Activated T-helper 1 cell treated with anti-CD3 and anti-CD28 coated beads, Interleukin-12 subunit alpha, Interleukin-12 subunit beta, Interleukin-2, Interleukin-4 antibody, amounts not matched to agents 30 ng/mL and 10 ng/mL and 1 ng/mL, durations not matched to agents 14 hours and 24 hours and 36 hours (primary cell): ENCODE measurements at regions of chr6 and their contacts with region 1.

Region 1: DNA sequence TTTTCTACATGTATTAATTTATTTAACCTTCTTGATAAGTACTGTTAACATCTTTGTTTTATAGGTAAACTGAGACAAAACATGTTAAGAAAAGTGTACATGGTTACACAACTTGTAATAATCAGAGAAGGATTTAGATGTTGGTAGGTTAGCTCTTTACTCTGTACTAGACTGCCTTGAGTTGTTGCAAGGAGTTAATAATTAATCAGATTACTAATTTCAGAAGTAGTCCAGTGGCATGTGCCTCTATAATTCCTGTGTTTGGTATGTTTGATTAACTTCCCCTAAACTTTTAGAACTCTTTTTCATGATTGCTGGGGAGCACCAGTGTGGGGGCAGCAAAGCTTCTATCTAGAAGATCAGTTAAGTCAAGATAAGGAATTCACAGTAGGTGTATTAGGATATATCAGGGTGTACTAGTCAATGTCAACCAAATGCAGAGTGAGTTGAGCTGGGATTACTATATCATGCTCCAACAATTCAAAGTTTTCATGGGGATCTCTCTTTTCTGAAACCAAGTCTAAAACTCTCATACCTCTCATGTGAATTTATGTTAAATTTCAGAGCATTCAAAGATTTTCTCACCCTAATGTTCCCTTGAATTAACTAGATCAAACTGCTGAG is 129.7 kb upstream of the AHI1 start:
- DNase-seq: no peak
- H3K4me3 Mint-ChIP-seq: no peak overlapping the region
- H3K27ac Mint-ChIP-seq: peak overlapping the region; percentile 68
- H3K4me1 Mint-ChIP-seq: peaks cover 80% of the 10 kb centered on the region
- H3K27me3 Mint-ChIP-seq: no peaks in the 10 kb centered on the region

Region 2: GRCh38 chr6:135568366-135568765 is 58.8 kb before region 1 on chr6:
- intact Hi-C with region 1: loop called (anchors 1 kb)
- DNase-seq: peak; percentile 51
- H3K4me3 Mint-ChIP-seq: peak overlapping the region; percentile 3
- H3K27ac Mint-ChIP-seq: peak overlapping the region; percentile 93
- H3K4me1 Mint-ChIP-seq: peaks cover 64% of the 10 kb centered on the region
- H3K27me3 Mint-ChIP-seq: no peaks in the 10 kb centered on the region

Region 3: DNA sequence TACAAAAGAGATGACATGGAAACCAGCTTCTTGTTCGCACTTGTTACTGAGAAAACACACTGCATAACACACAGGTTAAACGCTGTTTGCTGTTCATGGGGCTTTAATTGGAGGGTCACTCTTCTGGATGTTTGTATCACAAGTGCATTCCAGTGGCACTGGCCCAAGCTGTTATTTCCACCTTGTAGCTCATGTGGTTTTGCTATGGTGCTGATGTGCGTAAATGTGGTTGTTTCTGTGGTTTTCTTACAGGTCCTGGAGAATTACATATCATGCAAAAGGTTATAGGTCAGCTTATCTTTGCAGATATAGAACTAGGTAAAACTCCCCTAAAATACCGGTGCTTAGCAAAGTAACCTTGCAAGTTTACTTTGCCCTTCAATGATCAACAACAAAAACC is 40.4 kb before region 1 on chr6:
- intact Hi-C with region 1: loop called (anchors 1 kb)
- DNase-seq: peak; percentile 38
- H3K4me3 Mint-ChIP-seq: peak overlapping the region; percentile 27
- H3K27ac Mint-ChIP-seq: peak overlapping the region; percentile 88
- H3K4me1 Mint-ChIP-seq: peaks cover 74% of the 10 kb centered on the region
- H3K27me3 Mint-ChIP-seq: no peaks in the 10 kb centered on the region

Region 4: GRCh38 chr6:135640449-135641111 is 13.4 kb after region 1 on chr6:
- intact Hi-C with region 1: loop called (anchors 1 kb)
- DNase-seq: no peak
- H3K4me3 Mint-ChIP-seq: peak overlapping the region; percentile 38
- H3K27ac Mint-ChIP-seq: peak overlapping the region; percentile 91
- H3K4me1 Mint-ChIP-seq: peaks cover 68% of the 10 kb centered on the region
- H3K27me3 Mint-ChIP-seq: peaks cover 2% of the 10 kb centered on the region

Region 5: DNA sequence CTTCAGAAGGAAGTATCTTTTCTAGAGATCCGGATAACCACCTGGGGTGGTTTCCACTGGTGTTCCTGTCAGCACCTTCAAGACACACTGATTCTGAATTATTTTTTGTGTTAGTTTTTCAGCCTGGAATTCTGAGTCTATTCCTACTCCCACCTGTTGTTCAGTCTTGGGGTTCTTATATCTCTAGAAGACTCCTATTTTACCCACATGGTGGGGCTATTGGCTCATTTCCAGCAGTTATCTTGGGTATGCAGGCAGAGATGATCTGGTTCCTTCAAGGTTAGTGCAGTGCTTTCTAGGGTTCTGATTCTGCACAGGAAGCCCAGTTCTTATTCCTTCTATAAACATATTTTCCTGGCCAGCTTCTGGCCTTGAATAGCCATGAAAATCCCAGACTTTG is 48.7 kb after region 1 on chr6:
- intact Hi-C with region 1: loop called (anchors 1 kb)
- DNase-seq: peak; percentile 12
- H3K4me3 Mint-ChIP-seq: no peak overlapping the region
- H3K27ac Mint-ChIP-seq: peak overlapping the region; percentile 62
- H3K4me1 Mint-ChIP-seq: peaks cover 49% of the 10 kb centered on the region
- H3K27me3 Mint-ChIP-seq: no peaks in the 10 kb centered on the region

Region 6: DNA sequence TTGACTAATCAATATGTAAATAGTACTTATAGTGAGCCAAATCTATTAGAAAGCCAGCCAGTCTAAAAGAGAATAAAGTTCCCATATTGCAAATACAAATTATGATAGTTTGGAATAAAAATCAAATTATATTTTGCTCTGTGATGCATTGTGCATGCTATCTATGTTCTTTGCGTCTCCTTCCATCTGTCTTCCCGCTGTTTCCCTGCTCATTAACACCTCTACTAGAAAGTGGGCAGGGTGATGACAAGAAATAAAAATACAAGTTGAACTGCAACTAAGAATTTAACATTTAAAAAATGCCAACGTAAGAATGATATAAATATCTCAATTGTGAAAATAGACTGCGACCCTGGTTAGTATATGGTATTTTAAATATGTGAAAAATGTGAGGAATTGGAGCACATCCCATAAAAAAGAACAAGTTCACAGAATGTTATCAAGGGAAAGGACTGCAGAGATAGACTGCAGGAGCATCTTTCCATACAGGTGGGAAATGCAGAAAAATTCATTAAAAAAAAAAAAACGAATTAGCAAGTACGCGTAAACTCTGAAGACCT is 66.7 kb after region 1 on chr6:
- intact Hi-C with region 1: no loop called
- DNase-seq: no peak
- H3K4me3 Mint-ChIP-seq: no peak overlapping the region
- H3K27ac Mint-ChIP-seq: no peak overlapping the region
- H3K4me1 Mint-ChIP-seq: peaks cover 27% of the 10 kb centered on the region
- H3K27me3 Mint-ChIP-seq: peaks cover 7% of the 10 kb centered on the region

Region 7: GRCh38 chr6:136289579-136290409 is 662.6 kb after region 1 on chr6 and contains the start of gene BCLAF1:
- intact Hi-C with region 1: loop called (anchors 1 kb)
- DNase-seq: peak; percentile 100
- H3K4me3 Mint-ChIP-seq: peak within 1 kb of the TSS; percentile 98
- H3K27ac Mint-ChIP-seq: peak within 1 kb of the TSS; percentile 99
- H3K4me1 Mint-ChIP-seq: peaks cover 48% of the 10 kb centered on the region
- H3K27me3 Mint-ChIP-seq: peaks cover 2% of the 10 kb centered on the region
- total RNA-seq, gene BCLAF1: 233 and 237 TPM in 2 replicates